ENCODE measurements at regions of chrX and their contacts with region 1.

Region 1: DNA sequence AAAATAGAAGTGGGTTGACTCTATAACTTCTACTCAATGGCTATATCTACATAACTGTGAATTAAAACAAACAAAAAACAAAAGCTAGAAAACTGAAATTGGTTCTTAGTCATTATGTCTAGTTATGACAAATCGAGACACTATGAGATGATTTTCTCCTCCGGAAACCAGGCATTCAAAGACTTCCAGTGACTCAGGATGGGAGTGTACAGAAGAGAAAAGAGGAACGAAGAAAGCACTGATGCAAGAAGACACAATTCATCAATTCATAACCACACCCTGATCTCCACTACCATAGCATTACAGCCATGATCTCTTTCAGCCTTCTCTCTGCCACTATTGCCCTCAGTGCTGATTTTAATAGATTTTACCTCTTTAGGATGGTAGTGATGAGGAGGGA is 253.6 kb downstream of the CBLL2 start:
- DNase-seq: peak; percentile 93
- ATAC-seq: peak; percentile 97
- H3K4me3 ChIP-seq: no peak overlapping the region
- H3K27ac ChIP-seq: peak overlapping the region; percentile 90
- H3K4me1 ChIP-seq: peaks cover 19% of the 10 kb centered on the region
- H3K27me3 ChIP-seq: no peaks in the 10 kb centered on the region
- CTCF ChIP-seq: no peak

Region 2: GRCh38 chrX:22314631-22315062 is 211.7 kb before region 1 on chrX:
- CTCF ChIA-PET with region 1: no interaction called
- POLR2A ChIA-PET with region 1: no interaction called
- intact Hi-C with region 1: loop called (anchors 10 kb)
- DNase-seq: peak; percentile 23
- ATAC-seq: peak; percentile 72
- H3K4me3 ChIP-seq: 0 out of 2 replicates have a peak overlapping the region, but pooled peaks have one; percentile 14
- H3K27ac ChIP-seq: peak overlapping the region; percentile 66
- H3K4me1 ChIP-seq: peaks cover 19% of the 10 kb centered on the region
- H3K27me3 ChIP-seq: no peaks in the 10 kb centered on the region
- CTCF ChIP-seq: no peak

Region 3: GRCh38 chrX:22378296-22378695 is 148.0 kb before region 1 on chrX:
- CTCF ChIA-PET with region 1: no interaction called
- POLR2A ChIA-PET with region 1: no interaction called
- intact Hi-C with region 1: loop called (anchors 10 kb)
- DNase-seq: peak; percentile 34
- ATAC-seq: no peak
- H3K4me3 ChIP-seq: no peak overlapping the region
- H3K27ac ChIP-seq: no peak overlapping the region
- H3K4me1 ChIP-seq: peaks cover 38% of the 10 kb centered on the region
- H3K27me3 ChIP-seq: no peaks in the 10 kb centered on the region
- CTCF ChIP-seq: no peak

Region 4: DNA sequence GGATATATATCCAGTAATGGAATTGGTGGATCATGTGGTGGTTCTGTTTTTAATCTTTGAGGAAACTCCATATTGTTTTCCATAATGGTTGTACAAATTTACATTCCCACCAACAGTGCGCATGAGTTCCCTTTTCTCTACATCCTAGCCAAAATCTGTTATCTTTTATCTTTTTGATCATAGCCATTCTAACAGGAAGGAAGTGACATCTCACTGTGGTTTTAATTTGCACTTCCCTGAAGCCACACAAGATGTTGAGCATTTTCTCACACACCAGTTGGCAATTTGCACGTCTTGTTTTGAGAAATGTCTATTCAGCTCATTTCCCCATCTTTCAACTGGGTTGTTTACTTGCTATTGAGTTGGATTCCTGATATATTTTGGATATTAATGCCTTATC is 58.8 kb before region 1 on chrX:
- CTCF ChIA-PET with region 1: no interaction called
- POLR2A ChIA-PET with region 1: no interaction called
- intact Hi-C with region 1: no loop called
- DNase-seq: no peak
- ATAC-seq: no peak
- H3K4me3 ChIP-seq: no peak overlapping the region
- H3K27ac ChIP-seq: no peak overlapping the region
- H3K4me1 ChIP-seq: no peaks in the 10 kb centered on the region
- H3K27me3 ChIP-seq: no peaks in the 10 kb centered on the region
- CTCF ChIP-seq: no peak

Region 5: DNA sequence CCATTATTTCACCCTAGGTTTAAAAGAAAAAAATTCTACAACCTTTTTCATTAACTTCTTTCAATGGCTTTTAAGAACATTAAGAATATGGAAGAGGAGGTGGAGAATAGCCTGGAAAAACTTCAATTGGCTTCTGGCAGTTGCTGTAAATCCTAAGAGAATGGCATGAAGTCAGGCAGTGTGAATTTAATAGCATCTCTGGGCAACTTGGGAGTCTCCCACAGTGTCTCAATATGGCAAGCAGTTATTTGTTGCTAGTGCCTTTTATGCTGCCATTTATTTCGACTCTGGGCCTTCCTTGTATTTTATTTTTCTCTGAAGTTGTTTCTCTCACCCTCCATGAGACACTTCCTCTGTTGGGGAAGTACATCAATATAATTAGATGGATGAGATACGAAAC is 68.4 kb after region 1 on chrX:
- CTCF ChIA-PET with region 1: no interaction called
- POLR2A ChIA-PET with region 1: no interaction called
- intact Hi-C with region 1: no loop called
- DNase-seq: no peak
- ATAC-seq: no peak
- H3K4me3 ChIP-seq: no peak overlapping the region
- H3K27ac ChIP-seq: no peak overlapping the region
- H3K4me1 ChIP-seq: no peaks in the 10 kb centered on the region
- H3K27me3 ChIP-seq: no peaks in the 10 kb centered on the region
- CTCF ChIP-seq: no peak

Region 6: DNA sequence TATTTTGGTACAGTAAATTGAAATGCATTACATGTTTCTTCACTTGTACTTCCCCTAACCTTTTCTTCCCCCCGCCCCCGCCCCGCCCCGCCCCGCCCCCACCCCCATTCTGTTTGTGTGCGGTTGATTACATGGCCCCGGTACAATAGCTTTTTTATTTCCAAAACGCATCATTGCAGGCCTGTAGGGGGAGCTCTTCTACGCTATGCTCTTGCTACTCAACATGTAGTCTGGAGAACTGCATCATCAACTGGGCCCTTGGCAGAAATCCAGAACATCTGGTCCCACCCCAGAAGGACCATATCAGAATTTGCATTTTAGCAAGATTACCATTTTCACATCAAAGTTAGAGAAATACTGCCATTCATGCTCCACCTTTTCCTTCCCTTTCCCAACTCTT is 140.1 kb after region 1 on chrX:
- CTCF ChIA-PET with region 1: no interaction called
- POLR2A ChIA-PET with region 1: no interaction called
- intact Hi-C with region 1: no loop called
- DNase-seq: peak; percentile 25
- ATAC-seq: no peak
- H3K4me3 ChIP-seq: no peak overlapping the region
- H3K27ac ChIP-seq: no peak overlapping the region
- H3K4me1 ChIP-seq: peaks cover 14% of the 10 kb centered on the region
- H3K27me3 ChIP-seq: no peaks in the 10 kb centered on the region
- CTCF ChIP-seq: peak; percentile 39; the same call in 1 of the 2 replicates

Measured in PC-3 (cell line).